ENCODE measurements at regions of chr4 and their contacts with region 1.

Region 1: DNA sequence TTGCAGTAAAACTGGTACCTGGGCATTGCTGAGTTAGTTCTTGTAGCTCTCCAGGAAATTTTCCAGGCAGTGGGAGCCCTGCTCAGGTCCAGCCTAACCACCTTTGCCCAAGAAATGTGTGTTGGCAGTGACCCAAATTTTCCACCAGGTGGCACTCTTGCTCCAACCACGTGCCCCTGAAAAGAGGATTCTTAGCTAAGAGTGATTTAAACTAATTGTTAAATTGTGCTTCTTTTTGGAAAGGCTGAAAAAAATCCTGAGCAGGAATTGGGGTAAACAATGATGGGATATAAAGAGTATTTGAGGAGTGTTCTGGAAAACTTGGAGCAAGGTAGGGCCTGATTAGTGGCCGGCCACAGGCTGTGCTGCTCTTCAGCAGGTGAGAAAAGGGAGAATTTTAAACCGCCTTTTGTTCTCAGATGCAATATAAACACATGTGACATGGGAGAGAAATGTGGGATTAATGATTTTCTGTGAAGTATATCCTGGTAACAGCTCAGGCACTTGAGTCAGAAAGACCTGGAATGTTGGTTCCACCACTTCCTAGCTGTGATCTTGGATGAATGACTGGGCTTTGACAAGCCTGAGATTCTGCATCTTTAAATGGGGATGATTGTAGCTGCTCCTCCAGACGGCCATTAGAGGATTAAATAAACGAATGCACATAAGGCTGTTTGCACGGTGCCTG is 219.6 kb downstream of the PTTG2 start:
- DNase-seq: peak; percentile 41 to 86
- H3K4me3 ChIP-seq: no peak overlapping the region
- H3K27ac ChIP-seq: no peak overlapping the region
- H3K4me1 ChIP-seq: no peaks in the 10 kb centered on the region
- H3K27me3 ChIP-seq: no peaks in the 10 kb centered on the region
- CTCF ChIP-seq: peak; percentile 74 to 86 (median 84)
- EP300 ChIP-seq: no peak
- POLR2A ChIP-seq: no peak
- RAD21 ChIP-seq: peak; percentile 96 to 97

Region 2: GRCh38 chr4:38166082-38166481 is 13.8 kb before region 1 on chr4:
- CTCF ChIA-PET with region 1: interaction called, 28 read pairs
- POLR2A ChIA-PET with region 1: interaction called, 3 read pairs
- DNase-seq: no peak
- H3K4me3 ChIP-seq: no peak overlapping the region
- H3K27ac ChIP-seq: no peak overlapping the region
- H3K4me1 ChIP-seq: peaks cover 0 to under 1% (median 0%) of the 10 kb centered on the region in 4 experiments; a peak in 1 of 7 replicates
- H3K27me3 ChIP-seq: peaks cover 0 to 2% (median under 1%) of the 10 kb centered on the region in 4 experiments; a peak in 2 of 7 replicates
- CTCF ChIP-seq: peak; percentile 30 to 67 (median 58)
- EP300 ChIP-seq: no peak
- POLR2A ChIP-seq: no peak
- RAD21 ChIP-seq: peak; percentile 78 to 86

Region 3: GRCh38 chr4:38213083-38213805 is 33.4 kb after region 1 on chr4:
- CTCF ChIA-PET with region 1: interaction called, 10 read pairs
- POLR2A ChIA-PET with region 1: no interaction called
- DNase-seq: no peak
- H3K4me3 ChIP-seq: no peak overlapping the region
- H3K27ac ChIP-seq: no peak overlapping the region
- H3K4me1 ChIP-seq: peaks cover 0 to 5% (median 2%) of the 10 kb centered on the region in 4 experiments; a peak in 3 of 7 replicates
- H3K27me3 ChIP-seq: no peaks in the 10 kb centered on the region
- CTCF ChIP-seq: no peak
- EP300 ChIP-seq: no peak
- POLR2A ChIP-seq: no peak
- RAD21 ChIP-seq: no peak

Region 4: DNA sequence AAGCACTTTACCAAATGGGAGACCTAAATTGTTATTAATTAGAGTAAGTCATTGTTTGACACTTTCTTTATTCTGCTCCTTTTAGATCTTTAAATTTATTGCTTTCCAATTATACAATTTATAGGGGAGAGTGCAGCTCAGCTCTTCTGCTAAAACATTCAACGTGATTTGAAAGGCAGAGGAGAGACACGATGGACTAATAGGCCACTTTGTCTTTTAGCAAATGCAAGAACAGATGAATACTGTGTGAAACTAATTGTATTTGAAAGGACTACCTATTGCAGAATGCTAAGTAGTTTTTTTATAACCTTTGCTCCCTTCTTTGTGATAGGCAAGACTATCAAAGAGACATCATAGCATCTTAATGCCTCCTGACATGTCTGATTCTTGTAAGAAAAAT is 163.8 kb after region 1 on chr4:
- CTCF ChIA-PET with region 1: no interaction called
- POLR2A ChIA-PET with region 1: no interaction called
- DNase-seq: no peak
- H3K4me3 ChIP-seq: no peak overlapping the region
- H3K27ac ChIP-seq: no peak overlapping the region
- H3K4me1 ChIP-seq: no peaks in the 10 kb centered on the region
- H3K27me3 ChIP-seq: no peaks in the 10 kb centered on the region
- CTCF ChIP-seq: no peak
- EP300 ChIP-seq: no peak
- POLR2A ChIP-seq: no peak
- RAD21 ChIP-seq: no peak

Region 5: DNA sequence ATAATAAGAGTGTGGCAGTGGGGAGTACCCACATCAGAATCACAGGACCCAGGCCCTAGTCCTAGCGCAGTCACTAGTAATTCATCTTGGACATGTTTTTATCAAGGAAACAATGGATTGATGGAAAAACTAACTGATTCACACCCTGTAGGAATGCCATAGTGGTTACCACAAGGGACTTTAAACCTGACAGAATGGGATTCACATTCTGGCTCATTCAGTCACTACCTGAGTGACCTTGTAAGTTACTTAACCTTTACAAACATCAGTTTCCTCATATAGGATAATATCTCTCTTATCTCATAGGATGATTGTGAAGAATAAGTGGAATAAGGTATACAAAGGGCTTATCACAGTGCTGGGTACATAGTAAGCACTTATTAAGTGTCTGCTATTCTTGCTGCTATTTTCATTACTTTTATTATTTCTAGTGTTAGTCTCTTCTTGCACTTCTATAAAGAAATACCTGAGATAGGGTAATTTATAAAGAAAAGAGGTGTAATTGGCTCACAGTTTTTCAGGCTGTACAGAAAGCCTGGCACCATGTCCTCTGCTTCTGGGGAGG is 236.7 kb after region 1 on chr4:
- CTCF ChIA-PET with region 1: no interaction called
- POLR2A ChIA-PET with region 1: no interaction called
- DNase-seq: no peak
- H3K4me3 ChIP-seq: no peak overlapping the region
- H3K27ac ChIP-seq: no peak overlapping the region
- H3K4me1 ChIP-seq: peaks cover 0 to 3% (median under 1%) of the 10 kb centered on the region in 4 experiments; a peak in 3 of 7 replicates
- H3K27me3 ChIP-seq: no peaks in the 10 kb centered on the region
- CTCF ChIP-seq: no peak
- EP300 ChIP-seq: no peak
- POLR2A ChIP-seq: no peak
- RAD21 ChIP-seq: no peak

Region 6: DNA sequence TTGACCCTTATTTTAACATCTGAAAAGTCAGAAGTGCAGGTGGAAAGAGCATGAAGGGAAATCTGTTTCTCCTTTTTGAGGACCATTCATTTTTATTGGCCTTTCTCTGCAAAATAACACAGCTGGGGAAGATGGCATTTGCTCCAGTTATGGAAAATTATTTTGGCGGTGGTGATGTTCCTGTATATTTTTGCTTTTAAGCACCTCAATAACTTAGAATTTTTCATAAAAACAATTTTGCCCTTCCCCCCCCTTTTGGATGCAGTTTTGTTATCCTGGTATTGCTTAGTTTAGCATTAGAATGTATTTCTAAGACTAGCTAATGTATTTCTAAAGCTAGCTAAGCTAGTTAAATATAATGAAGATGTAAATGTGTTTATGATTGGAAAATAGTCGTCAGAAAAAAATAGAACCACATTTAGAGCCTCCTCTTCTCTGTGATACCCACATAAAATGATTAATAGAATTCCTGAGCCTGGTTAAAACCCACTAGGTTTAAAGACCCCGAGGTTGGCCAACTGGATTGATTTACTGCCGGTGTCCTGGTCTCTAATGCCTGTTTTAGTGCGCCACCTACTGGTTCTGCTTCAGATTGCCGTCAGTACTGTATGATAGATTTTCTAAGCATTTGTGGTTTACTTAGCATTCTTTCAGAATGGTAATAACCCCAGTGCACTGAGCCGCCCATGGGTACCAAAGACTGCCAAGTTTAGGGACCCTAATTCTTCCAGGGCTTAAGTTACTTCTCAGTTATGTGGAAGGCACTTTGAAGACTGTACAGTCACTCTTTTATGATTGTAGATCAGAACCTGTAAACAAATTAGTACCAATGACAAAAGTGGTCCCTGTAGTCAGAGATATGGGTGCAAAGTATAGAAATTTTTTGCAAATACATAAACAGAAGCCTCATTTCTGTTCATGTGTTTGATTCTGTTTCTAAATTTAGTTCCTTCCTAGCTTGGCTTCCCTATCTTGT is 495.6 kb after region 1 on chr4:
- CTCF ChIA-PET with region 1: interaction called, 36 read pairs
- POLR2A ChIA-PET with region 1: no interaction called
- DNase-seq: peak in 1 of 2 experiments; percentile 87
- H3K4me3 ChIP-seq: no peak overlapping the region
- H3K27ac ChIP-seq: no peak overlapping the region
- H3K4me1 ChIP-seq: peaks cover 22 to 41% (median 26%) of the 10 kb centered on the region in 4 experiments
- H3K27me3 ChIP-seq: no peaks in the 10 kb centered on the region
- CTCF ChIP-seq: peak; percentile 47 to 87 (median 86)
- EP300 ChIP-seq: no peak
- POLR2A ChIP-seq: no peak
- RAD21 ChIP-seq: peak; percentile 98 to 100

Region 7: DNA sequence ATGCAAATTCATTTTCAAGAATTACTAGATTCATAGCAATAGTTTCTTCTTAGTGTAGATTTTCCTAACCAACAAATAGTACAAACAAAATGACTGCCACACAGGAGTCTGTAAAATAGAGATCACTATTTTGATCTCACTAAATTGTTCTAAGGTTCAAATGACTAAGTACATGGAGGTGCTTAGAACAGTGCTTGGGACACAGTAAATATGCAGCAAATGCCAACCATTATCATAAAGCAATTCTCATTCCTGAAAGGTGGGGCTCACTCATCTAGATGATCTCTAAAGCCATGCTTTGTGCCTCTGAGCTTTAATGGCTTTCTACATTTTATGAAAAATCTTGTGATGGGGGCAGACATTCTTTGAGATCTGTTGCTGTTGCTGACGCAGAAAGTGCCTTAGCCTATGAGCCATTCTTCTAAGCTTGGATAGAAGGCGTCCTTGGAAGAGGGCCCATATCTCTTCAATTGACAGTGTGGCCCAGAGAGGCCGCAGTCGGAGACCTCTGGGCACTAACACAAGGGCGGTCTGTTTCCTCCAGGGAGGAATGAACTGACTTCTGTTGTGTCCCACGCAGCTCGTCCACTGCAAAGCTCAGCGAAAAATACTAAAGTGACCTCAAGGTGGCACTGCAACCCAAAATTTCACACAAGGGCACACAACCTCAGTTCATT is 579.4 kb after region 1 on chr4:
- CTCF ChIA-PET with region 1: interaction called, 18 read pairs
- POLR2A ChIA-PET with region 1: no interaction called
- DNase-seq: peak; percentile 15 to 79
- H3K4me3 ChIP-seq: no peak overlapping the region
- H3K27ac ChIP-seq: no peak overlapping the region
- H3K4me1 ChIP-seq: no peaks in the 10 kb centered on the region
- H3K27me3 ChIP-seq: no peaks in the 10 kb centered on the region
- CTCF ChIP-seq: peak; percentile 49 to 74 (median 70)
- EP300 ChIP-seq: no peak
- POLR2A ChIP-seq: no peak
- RAD21 ChIP-seq: peak; percentile 84 to 87

Measured in H1 (cell line).